GM13976 (cell line): ENCODE measurements at regions of chr3 and their contacts with region 1.

Region 1: DNA sequence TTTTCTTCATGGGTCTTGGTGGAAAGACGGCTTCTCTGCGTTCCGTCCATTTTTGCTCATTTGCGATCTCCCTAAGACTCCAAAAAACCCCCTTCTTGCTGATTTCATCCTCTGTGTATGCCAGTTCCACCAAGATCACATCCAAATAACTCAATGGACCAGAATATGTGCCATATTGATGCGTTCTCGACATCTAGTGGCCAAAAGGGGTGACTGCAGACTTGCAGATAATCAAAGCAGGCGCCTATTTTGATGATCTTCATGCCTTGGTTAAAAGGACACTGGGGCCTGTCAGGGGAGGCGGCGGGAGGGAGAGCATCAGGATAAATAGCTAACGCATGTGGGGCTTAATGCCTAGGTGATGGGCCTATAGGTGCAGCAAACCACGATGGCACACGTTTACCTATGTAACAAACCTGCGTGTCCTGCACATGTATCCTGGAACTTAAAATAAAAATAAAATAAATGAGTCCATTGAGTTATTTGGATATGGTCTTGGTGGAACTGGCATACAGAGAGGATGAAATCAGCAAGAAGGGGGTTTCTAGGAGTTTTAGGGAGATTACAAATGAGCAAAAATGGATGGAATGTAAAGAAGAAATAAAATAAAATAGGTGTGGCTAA is 104.2 kb upstream of the RAD18 start:
- DNase-seq: peak; percentile 68
- CTCF ChIP-seq: peak; percentile 70

Region 2: GRCh38 chr3:8911781-8912180 is 155.7 kb before region 1 on chr3:
- in situ Hi-C with region 1: no loop called
- DNase-seq: no peak
- CTCF ChIP-seq: no peak

Region 3: GRCh38 chr3:8982509-8982908 is 85.0 kb before region 1 on chr3:
- in situ Hi-C with region 1: loop called (anchors 5 kb)
- DNase-seq: no peak
- CTCF ChIP-seq: no peak